ENCODE measurements at regions of chr7 and their contacts with region 1.

Region 1: DNA sequence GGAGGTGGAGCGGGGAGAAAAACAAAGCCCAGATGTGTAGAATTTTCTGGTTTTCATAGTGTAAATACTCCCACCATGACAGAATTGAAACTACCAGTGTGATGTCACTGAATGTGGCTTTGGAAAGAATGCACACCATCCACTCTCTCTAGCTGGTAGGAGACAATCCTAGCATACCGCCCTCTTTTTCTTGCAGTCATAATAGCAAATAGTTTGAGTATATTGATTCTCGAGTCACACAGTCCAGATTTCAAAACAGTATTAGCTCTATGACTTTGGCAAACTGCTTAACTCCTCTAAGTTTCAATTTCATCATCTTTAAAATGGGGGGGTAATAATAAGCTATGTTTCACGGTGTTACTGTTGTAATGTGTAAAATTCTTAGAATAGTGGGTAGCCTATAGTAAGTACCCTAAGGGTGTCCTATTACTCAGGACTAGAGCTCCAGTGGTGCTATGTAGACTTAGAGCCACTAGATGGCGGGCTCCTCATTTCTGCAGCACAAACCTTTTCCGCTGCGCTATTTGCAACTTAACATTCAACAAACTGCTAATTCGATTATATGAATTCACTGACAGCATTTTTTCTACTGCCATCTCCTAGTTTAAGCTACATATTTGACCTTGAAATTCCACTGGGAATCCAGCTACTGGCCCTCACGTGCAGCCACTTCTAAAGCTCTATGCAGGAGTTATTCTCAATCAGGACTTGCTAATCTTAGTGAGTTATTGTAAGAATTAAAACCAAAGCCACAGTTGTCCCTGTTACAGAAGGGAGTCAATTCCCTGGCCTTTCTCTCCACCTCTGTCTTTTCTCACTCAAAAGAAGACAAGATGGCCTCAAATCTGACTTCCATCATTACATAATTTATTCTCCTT is 18.7 kb downstream of the TAS2R40 start:
- DNase-seq: no peak
- ATAC-seq: peak; percentile 98
- H3K4me3 Mint-ChIP-seq: no peak overlapping the region
- H3K27ac Mint-ChIP-seq: no peak overlapping the region
- H3K4me1 Mint-ChIP-seq: peaks cover 4% of the 10 kb centered on the region
- H3K27me3 Mint-ChIP-seq: peaks cover 14% of the 10 kb centered on the region
- CTCF ChIP-seq: peak; percentile 51

Region 2: GRCh38 chr7:142873281-142873787 is 367.2 kb before region 1 on chr7:
- CTCF ChIA-PET with region 1: no interaction called
- POLR2A ChIA-PET with region 1: no interaction called
- intact Hi-C with region 1: no loop called
- DNase-seq: no peak
- ATAC-seq: peak; percentile 52
- H3K4me3 Mint-ChIP-seq: no peak overlapping the region
- H3K27ac Mint-ChIP-seq: no peak overlapping the region
- H3K4me1 Mint-ChIP-seq: no peaks in the 10 kb centered on the region
- H3K27me3 Mint-ChIP-seq: peaks cover 3% of the 10 kb centered on the region
- CTCF ChIP-seq: no peak

Region 3: DNA sequence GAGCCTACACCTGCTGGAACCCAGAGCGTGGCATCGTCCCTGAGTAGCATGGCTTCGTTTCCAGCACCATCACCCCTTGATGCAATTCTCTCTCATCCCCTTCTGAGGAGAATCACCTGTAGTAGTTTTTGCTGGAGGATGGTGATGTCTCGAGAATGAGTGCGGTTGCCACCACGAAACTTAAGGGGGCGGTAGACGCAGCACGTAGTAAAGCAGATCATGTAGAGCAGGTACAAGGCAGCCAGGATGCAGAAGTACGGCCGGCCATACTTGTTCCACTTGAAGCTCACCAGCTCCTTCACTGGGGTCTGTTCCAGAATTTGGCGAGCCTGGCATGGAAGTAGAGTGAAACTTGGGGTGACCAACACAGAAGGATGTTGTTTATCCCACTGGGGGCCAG is 315.1 kb before region 1 on chr7:
- CTCF ChIA-PET with region 1: no interaction called
- POLR2A ChIA-PET with region 1: no interaction called
- intact Hi-C with region 1: no loop called
- DNase-seq: no peak
- ATAC-seq: no peak
- H3K4me3 Mint-ChIP-seq: no peak overlapping the region
- H3K27ac Mint-ChIP-seq: no peak overlapping the region
- H3K4me1 Mint-ChIP-seq: peaks cover 25% of the 10 kb centered on the region
- H3K27me3 Mint-ChIP-seq: peaks cover 1% of the 10 kb centered on the region
- CTCF ChIP-seq: no peak

Region 4: GRCh38 chr7:143147072-143147694 is 93.3 kb before region 1 on chr7:
- CTCF ChIA-PET with region 1: no interaction called
- POLR2A ChIA-PET with region 1: no interaction called
- intact Hi-C with region 1: no loop called
- DNase-seq: no peak
- ATAC-seq: no peak
- H3K4me3 Mint-ChIP-seq: no peak overlapping the region
- H3K27ac Mint-ChIP-seq: no peak overlapping the region
- H3K4me1 Mint-ChIP-seq: no peaks in the 10 kb centered on the region
- H3K27me3 Mint-ChIP-seq: no peaks in the 10 kb centered on the region
- CTCF ChIP-seq: no peak

Region 5: GRCh38 chr7:143214789-143215679 is 25.5 kb before region 1 on chr7:
- CTCF ChIA-PET with region 1: interaction called, 11 read pairs
- POLR2A ChIA-PET with region 1: no interaction called
- intact Hi-C with region 1: no loop called
- DNase-seq: no peak
- ATAC-seq: peak; percentile 97
- H3K4me3 Mint-ChIP-seq: no peak overlapping the region
- H3K27ac Mint-ChIP-seq: no peak overlapping the region
- H3K4me1 Mint-ChIP-seq: peaks cover 16% of the 10 kb centered on the region
- H3K27me3 Mint-ChIP-seq: peaks cover 2% of the 10 kb centered on the region
- CTCF ChIP-seq: peak; percentile 99

Region 6: GRCh38 chr7:143256932-143257331 is 16.4 kb after region 1 on chr7:
- CTCF ChIA-PET with region 1: interaction called, 24 read pairs
- POLR2A ChIA-PET with region 1: no interaction called
- intact Hi-C with region 1: loop called (anchors 1 kb)
- DNase-seq: no peak
- ATAC-seq: peak; percentile 89
- H3K4me3 Mint-ChIP-seq: no peak overlapping the region
- H3K27ac Mint-ChIP-seq: peak overlapping the region; percentile 85
- H3K4me1 Mint-ChIP-seq: peaks cover 47% of the 10 kb centered on the region
- H3K27me3 Mint-ChIP-seq: no peaks in the 10 kb centered on the region
- CTCF ChIP-seq: no peak

Region 7: GRCh38 chr7:143287935-143288826 is 47.7 kb after region 1 on chr7 and contains the start of gene CASP2:
- CTCF ChIA-PET with region 1: interaction called, 7 read pairs
- POLR2A ChIA-PET with region 1: interaction called, 4 read pairs
- intact Hi-C with region 1: loop called (anchors 1 kb)
- DNase-seq: peak; percentile 97
- ATAC-seq: peak; percentile 91
- H3K4me3 Mint-ChIP-seq: peak within 1 kb of the TSS; percentile 96
- H3K27ac Mint-ChIP-seq: peak within 1 kb of the TSS; percentile 89
- H3K4me1 Mint-ChIP-seq: peaks cover 54% of the 10 kb centered on the region
- H3K27me3 Mint-ChIP-seq: no peaks in the 10 kb centered on the region
- CTCF ChIP-seq: no peak
- total RNA-seq, gene CASP2: 59.5 and 62.2 TPM in 2 replicates

Region 8: GRCh38 chr7:143305423-143306070 is 65.0 kb after region 1 on chr7:
- CTCF ChIA-PET with region 1: interaction called, 51 read pairs
- POLR2A ChIA-PET with region 1: no interaction called
- intact Hi-C with region 1: loop called (anchors 1 kb)
- DNase-seq: peak; percentile 24
- ATAC-seq: peak; percentile 65
- H3K4me3 Mint-ChIP-seq: no peak overlapping the region
- H3K27ac Mint-ChIP-seq: no peak overlapping the region
- H3K4me1 Mint-ChIP-seq: peaks cover 17% of the 10 kb centered on the region
- H3K27me3 Mint-ChIP-seq: no peaks in the 10 kb centered on the region
- CTCF ChIP-seq: no peak

Region 9: DNA sequence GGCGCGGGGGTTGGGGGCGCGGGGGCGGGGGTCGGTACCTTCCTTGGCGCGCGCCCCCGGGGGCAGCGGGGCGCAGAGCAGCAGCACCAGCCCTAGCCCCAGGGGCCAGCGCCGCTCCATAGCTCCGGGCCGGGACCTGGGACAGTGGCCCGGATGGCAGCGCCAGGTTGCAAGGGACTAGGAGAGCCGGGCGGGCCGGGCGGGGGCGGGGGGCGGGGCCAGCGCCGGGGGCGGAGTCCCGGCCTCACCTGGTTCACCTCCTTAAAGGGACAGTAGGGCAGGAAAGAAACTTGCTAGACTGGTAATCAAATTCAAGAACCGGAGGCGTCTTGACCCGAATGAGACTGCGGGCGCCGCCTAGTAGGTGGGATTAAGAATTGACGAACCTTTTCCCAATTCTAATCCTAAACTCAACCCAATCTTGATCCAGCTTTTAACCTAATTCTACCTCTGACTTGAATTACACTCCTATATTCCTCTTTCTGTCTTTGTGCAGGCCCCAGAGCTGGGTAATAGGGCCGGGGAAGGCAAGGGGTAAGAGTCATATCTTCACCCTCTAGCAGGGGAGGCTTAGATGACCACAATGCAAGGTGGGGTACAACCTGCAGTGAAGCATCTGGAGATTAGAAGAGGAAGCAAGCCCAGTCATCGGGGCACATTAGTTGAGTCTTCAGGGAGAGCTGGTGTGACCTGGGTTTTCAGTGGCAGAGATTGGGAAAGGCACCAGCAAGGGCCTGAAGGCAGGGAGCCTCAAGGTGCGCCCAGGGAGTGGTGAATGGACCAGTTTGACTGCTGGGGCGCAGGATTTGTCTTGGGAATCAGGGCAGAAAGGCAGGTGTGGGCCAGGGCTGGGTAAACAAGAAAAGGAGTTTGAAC is 168.4 kb after region 1 on chr7 and contains the start of gene EPHA1:
- CTCF ChIA-PET with region 1: interaction called, 118 read pairs
- POLR2A ChIA-PET with region 1: no interaction called
- intact Hi-C with region 1: loop called (anchors 2 kb)
- DNase-seq: no peak
- ATAC-seq: peak; percentile 80
- H3K4me3 Mint-ChIP-seq: peak within 1 kb of the TSS; percentile 38
- H3K27ac Mint-ChIP-seq: no peak within 1 kb of the TSS
- H3K4me1 Mint-ChIP-seq: peaks cover 29% of the 10 kb centered on the region
- H3K27me3 Mint-ChIP-seq: peaks cover 34% of the 10 kb centered on the region
- CTCF ChIP-seq: no peak
- total RNA-seq, gene EPHA1: not detected in 2 replicates

Region 10: DNA sequence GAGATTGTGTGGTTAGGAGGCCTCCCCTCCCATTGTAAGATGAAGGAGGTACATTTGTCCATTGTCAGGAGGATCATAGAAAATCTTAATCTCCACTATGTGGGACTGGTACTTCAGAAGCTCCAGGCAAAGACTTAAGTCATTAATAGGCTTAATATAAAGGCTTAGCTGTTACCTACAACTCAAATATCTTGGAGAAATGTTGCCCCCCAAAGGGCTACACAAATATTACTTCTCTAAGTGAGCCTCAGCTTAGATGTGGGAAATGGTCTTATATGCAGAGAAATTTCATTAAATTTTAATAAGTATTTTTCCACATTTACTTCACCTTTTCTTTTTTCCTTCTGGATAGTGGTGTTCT is 264.4 kb after region 1 on chr7:
- CTCF ChIA-PET with region 1: no interaction called
- POLR2A ChIA-PET with region 1: no interaction called
- intact Hi-C with region 1: loop called (anchors 10 kb)
- DNase-seq: no peak
- ATAC-seq: no peak
- H3K4me3 Mint-ChIP-seq: no peak overlapping the region
- H3K27ac Mint-ChIP-seq: no peak overlapping the region
- H3K4me1 Mint-ChIP-seq: no peaks in the 10 kb centered on the region
- H3K27me3 Mint-ChIP-seq: peaks cover 2% of the 10 kb centered on the region
- CTCF ChIP-seq: no peak

Region 11: GRCh38 chr7:144738708-144739314 is 1498.3 kb after region 1 on chr7:
- CTCF ChIA-PET with region 1: no interaction called
- POLR2A ChIA-PET with region 1: no interaction called
- intact Hi-C with region 1: no loop called
- DNase-seq: no peak
- ATAC-seq: peak; percentile 52
- H3K4me3 Mint-ChIP-seq: no peak overlapping the region
- H3K27ac Mint-ChIP-seq: no peak overlapping the region
- H3K4me1 Mint-ChIP-seq: peaks cover 2% of the 10 kb centered on the region
- H3K27me3 Mint-ChIP-seq: no peaks in the 10 kb centered on the region
- CTCF ChIP-seq: peak; percentile 68